ENCODE measurements at regions of chr10 and their contacts with region 1.

Region 1: GRCh38 chr10:120423431-120424197 is 33.4 kb upstream of the PLPP4 start:
- DNase-seq: peak; percentile 5 to 12 (median 10)
- H3K4me3 ChIP-seq: no peak overlapping the region
- H3K4me3 Mint-ChIP-seq: no peak overlapping the region
- H3K27ac ChIP-seq: no peak overlapping the region
- H3K27ac Mint-ChIP-seq: no peak overlapping the region
- H3K4me1 ChIP-seq: no peaks in the 10 kb centered on the region
- H3K4me1 Mint-ChIP-seq: no peaks in the 10 kb centered on the region
- H3K27me3 ChIP-seq: no peaks in the 10 kb centered on the region
- H3K27me3 Mint-ChIP-seq: peaks cover 2 to 4% (median 3%) of the 10 kb centered on the region in 3 donors
- CTCF ChIP-seq: peak; percentile 87

Region 2: DNA sequence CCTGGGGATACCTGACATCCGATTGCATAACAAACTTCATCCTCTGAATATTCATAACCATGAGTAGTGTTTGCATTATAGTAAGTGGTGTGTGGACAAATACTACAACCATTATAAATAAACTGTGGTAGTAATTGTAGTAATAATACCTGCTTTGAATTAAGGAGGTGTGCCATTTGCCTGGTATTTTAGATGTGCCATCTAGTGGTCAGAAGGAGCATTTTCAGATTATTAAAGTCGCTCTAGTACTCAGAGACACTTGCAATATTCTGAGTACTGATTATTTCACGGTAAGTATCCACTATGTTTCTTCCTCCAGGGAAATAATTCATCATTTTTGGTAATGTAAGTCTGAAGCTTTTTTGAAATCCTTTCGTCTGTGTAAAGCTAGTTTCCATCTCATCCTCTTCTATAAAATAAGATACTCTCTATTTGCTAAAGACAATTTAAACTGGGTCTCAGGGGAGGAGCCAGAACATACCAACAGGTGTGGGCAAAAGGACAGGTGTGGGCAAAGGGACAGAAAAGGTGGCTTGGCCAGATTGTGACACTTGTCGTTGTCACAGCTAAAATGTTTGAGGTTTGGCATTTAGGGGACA is 312.3 kb after region 1 on chr10:
- intact Hi-C with region 1: loop called in 1 of 2 experiments (anchors 10 kb)
- DNase-seq: peak in 2 of 3 donors; percentile 21 to 35
- H3K4me3 ChIP-seq: no peak overlapping the region
- H3K4me3 Mint-ChIP-seq: no peak overlapping the region
- H3K27ac ChIP-seq: no peak overlapping the region
- H3K27ac Mint-ChIP-seq: peak overlapping the region in 1 of 7 donors; percentile 19
- H3K4me1 ChIP-seq: peaks cover 0 to 4% of the 10 kb centered on the region in 2 donors
- H3K4me1 Mint-ChIP-seq: peaks cover 11% of the 10 kb centered on the region
- H3K27me3 ChIP-seq: no peaks in the 10 kb centered on the region
- H3K27me3 Mint-ChIP-seq: peaks cover 2 to 6% (median 3%) of the 10 kb centered on the region in 3 donors
- CTCF ChIP-seq: peak; percentile 95

Region 3: GRCh38 chr10:122323941-122324675 is 1900.5 kb after region 1 on chr10:
- intact Hi-C with region 1: no loop called
- DNase-seq: peak in 1 of 3 donors; percentile 23
- H3K4me3 ChIP-seq: no peak overlapping the region
- H3K4me3 Mint-ChIP-seq: no peak overlapping the region
- H3K27ac ChIP-seq: no peak overlapping the region
- H3K27ac Mint-ChIP-seq: no peak overlapping the region
- H3K4me1 ChIP-seq: peaks cover 0 to 7% of the 10 kb centered on the region in 2 donors
- H3K4me1 Mint-ChIP-seq: peaks cover 9% of the 10 kb centered on the region
- H3K27me3 ChIP-seq: no peaks in the 10 kb centered on the region
- H3K27me3 Mint-ChIP-seq: peaks cover 4 to 14% (median 7%) of the 10 kb centered on the region in 3 donors
- CTCF ChIP-seq: no peak